Activated CD4-positive, alpha-beta T cell treated with anti-CD3 and anti-CD28 coated beads for 36 hours (primary cell): ENCODE measurements at regions of chr11 and their contacts with region 1.

Region 1: GRCh38 chr11:94876645-94877442 is 96.5 kb downstream of the CWC15 start:
- DNase-seq: peak; percentile 88
- ATAC-seq: peak; percentile 96
- H3K4me3 Mint-ChIP-seq: peak overlapping the region; percentile 19
- H3K27ac Mint-ChIP-seq: peak overlapping the region; percentile 82
- H3K4me1 Mint-ChIP-seq: peaks cover 23% of the 10 kb centered on the region
- H3K27me3 Mint-ChIP-seq: peaks cover 2% of the 10 kb centered on the region

Region 2: DNA sequence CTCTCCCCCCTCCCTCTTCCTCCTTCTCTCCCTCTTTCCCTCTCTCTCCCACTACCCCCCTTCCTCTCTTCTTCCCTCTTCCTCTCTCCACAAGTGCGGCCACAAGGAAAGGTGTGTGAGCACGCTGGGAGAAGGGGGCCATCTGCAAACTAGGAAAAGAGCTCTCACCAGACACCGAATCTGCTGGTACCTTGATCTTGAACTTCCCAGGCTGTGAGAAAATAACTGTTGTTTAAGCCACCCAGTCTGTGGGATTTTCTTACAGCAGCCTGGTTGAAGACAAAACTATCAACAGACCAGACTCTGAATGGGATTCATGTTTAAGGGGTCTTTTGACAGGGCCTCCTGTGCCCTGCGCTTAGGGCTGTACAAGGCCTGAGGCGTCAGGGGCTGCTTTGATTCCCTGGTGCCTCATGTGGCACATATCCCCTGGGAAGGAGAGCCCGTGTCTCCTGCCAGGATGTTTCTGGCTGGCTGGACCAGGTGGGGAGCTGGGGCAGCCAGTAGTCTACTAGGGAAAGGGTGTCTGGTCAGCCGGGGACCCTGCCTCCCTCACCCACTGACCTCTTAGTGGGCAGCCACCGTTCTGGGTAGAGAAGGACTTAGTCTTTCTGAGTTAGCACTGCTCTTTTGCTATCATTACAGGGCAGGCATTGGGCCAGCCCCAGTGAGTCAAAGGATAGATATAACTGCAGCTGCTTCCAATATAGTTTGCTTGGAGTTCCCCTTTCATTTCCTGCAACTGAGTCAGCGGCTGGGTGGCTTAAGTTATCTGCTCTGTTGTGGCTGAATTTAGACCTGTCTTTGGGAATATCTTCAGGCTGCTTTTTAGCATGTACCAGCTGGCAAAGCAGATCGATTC is 742.0 kb before region 1 on chr11:
- CTCF ChIA-PET with region 1: no interaction called
- POLR2A ChIA-PET with region 1: no interaction called
- intact Hi-C with region 1: loop called in 1 of 2 experiments (anchors 5 kb)
- DNase-seq: peak; percentile 74
- ATAC-seq: peak; percentile 95
- H3K4me3 Mint-ChIP-seq: peak overlapping the region; percentile 12
- H3K27ac Mint-ChIP-seq: peak overlapping the region; percentile 72
- H3K4me1 Mint-ChIP-seq: peaks cover 45% of the 10 kb centered on the region
- H3K27me3 Mint-ChIP-seq: no peaks in the 10 kb centered on the region

Region 3: GRCh38 chr11:94786264-94787126 is 90.3 kb before region 1 on chr11:
- CTCF ChIA-PET with region 1: no interaction called
- POLR2A ChIA-PET with region 1: no interaction called
- intact Hi-C with region 1: loop called in 1 of 2 experiments (anchors 1 kb)
- DNase-seq: no peak
- ATAC-seq: peak; percentile 42
- H3K4me3 Mint-ChIP-seq: no peak overlapping the region
- H3K27ac Mint-ChIP-seq: no peak overlapping the region
- H3K4me1 Mint-ChIP-seq: no peaks in the 10 kb centered on the region
- H3K27me3 Mint-ChIP-seq: peaks cover 8% of the 10 kb centered on the region

Region 4: GRCh38 chr11:95764267-95764898 is 887.5 kb after region 1 on chr11:
- CTCF ChIA-PET with region 1: no interaction called
- POLR2A ChIA-PET with region 1: no interaction called
- intact Hi-C with region 1: no loop called
- DNase-seq: no peak
- ATAC-seq: peak; percentile 65
- H3K4me3 Mint-ChIP-seq: no peak overlapping the region
- H3K27ac Mint-ChIP-seq: no peak overlapping the region
- H3K4me1 Mint-ChIP-seq: no peaks in the 10 kb centered on the region
- H3K27me3 Mint-ChIP-seq: no peaks in the 10 kb centered on the region